Calu3 (cell line): ENCODE measurements at regions of chr2 and their contacts with region 1.

Region 1: GRCh38 chr2:51000849-51001617 is 30.9 kb downstream of the NRXN1 start:
- DNase-seq: no peak
- H3K4me3 Mint-ChIP-seq: no peak overlapping the region
- H3K27ac Mint-ChIP-seq: no peak overlapping the region
- H3K4me1 Mint-ChIP-seq: peaks cover 8% of the 10 kb centered on the region
- H3K27me3 Mint-ChIP-seq: no peaks in the 10 kb centered on the region
- CTCF ChIP-seq: no peak

Region 2: GRCh38 chr2:51013079-51013932 is 12.3 kb after region 1 on chr2:
- CTCF ChIA-PET with region 1: interaction called, 13 read pairs
- intact Hi-C with region 1: no loop called
- DNase-seq: peak; percentile 35
- H3K4me3 Mint-ChIP-seq: no peak overlapping the region
- H3K27ac Mint-ChIP-seq: no peak overlapping the region
- H3K4me1 Mint-ChIP-seq: peaks cover 13% of the 10 kb centered on the region
- H3K27me3 Mint-ChIP-seq: no peaks in the 10 kb centered on the region
- CTCF ChIP-seq: no peak